HCT116 (cell line): ENCODE measurements at regions of chr17 and their contacts with region 1.

Region 1: DNA sequence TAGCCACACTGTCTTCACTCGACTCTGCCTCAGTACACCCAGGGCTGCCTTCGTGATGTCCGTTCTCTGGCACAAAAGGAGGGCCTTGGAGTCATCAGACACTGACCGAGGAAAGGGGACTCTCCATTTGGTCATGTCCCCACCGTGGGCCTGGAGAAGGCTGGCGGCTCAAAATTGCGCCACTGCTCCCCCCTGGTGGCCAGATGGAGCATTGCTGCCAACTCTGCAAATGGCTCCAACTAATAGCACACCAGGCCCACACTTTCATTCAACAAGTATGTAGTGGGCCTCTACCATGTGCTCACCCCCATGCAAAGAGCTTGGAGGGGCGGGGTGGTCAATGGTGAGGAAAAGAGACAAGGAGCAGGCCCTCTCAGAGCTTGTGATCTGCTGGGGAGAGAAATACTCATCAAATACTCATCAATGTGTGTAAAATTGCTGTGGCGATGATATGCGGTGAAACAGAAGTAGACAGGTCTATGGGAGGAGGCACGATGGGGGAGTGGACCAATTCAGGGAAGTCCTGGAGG is 5.2 kb upstream of the GRIN2C start:
- DNase-seq: peak; percentile 44
- ATAC-seq: peak; percentile 80
- H3K4me3 ChIP-seq: no peak overlapping the region
- H3K27ac ChIP-seq: peak overlapping the region; percentile 7
- H3K4me1 ChIP-seq: peaks cover 0 to 17% of the 10 kb centered on the region in 2 experiments; a peak in 1 of 4 replicates
- H3K27me3 ChIP-seq: no peaks in the 10 kb centered on the region
- CTCF ChIP-seq: peak; percentile 89 to 100 (median 100)
- POLR2A ChIP-seq: no peak
- RAD21 ChIP-seq: no peak; the same call in 1 of the 2 replicates

Region 2: GRCh38 chr17:74579900-74580299 is 285.0 kb before region 1 on chr17:
- CTCF ChIA-PET with region 1: no interaction called
- POLR2A ChIA-PET with region 1: no interaction called
- RAD21 ChIA-PET with region 1: no interaction called
- intact Hi-C with region 1: no loop called
- DNase-seq: no peak
- ATAC-seq: no peak
- H3K4me3 ChIP-seq: no peak overlapping the region
- H3K27ac ChIP-seq: no peak overlapping the region
- H3K4me1 ChIP-seq: no peaks in the 10 kb centered on the region
- H3K27me3 ChIP-seq: peaks cover 21% of the 10 kb centered on the region; the same call in 1 of the 2 replicates
- CTCF ChIP-seq: no peak
- POLR2A ChIP-seq: no peak
- RAD21 ChIP-seq: no peak

Region 3: DNA sequence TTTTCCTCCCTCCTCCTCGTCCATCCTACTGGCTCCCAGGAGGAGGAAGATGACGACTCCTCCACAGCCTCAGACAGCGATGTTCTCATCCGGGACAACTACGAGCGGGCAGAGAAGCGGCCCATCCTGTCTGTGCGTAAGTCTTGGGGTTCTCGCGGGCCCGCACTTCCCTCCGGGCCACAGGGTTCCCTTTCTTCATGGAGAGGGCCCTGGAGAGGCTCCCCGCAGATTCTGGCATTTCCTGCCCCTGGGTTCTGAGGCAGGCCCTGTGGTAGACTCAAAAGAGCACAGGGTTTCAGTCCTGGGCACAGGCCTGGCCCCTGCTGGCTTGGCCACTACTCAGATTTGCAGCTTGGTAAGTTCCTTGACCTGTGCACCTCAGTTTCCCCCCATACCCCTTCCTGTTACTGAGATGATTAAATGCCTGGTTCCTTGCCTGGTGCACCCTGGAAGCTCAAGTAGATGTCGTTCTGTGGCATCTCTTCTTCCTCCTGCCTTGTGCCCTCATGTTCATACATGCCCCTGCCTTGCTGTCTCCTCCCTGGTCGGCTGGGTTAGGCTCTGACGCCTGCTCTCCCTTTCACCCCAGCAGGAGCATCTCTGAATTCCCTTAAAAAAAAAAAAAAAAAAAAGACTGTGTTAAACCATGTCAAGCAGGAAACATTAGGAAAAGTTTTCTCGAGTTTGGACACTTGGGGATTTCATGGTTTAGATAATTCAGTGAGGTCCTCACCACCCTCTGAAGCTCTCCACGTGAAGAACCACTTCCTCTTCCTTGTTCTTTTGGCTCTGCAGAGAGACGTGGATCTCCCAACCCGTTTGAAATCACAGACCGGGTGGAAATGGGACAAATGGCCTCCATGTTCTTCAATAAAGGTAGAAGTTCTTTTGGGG is 74.5 kb before region 1 on chr17:
- CTCF ChIA-PET with region 1: interaction called, 17 read pairs
- POLR2A ChIA-PET with region 1: no interaction called
- RAD21 ChIA-PET with region 1: no interaction called
- intact Hi-C with region 1: loop called (anchors 1 kb)
- DNase-seq: no peak
- ATAC-seq: no peak
- H3K4me3 ChIP-seq: no peak overlapping the region
- H3K27ac ChIP-seq: no peak overlapping the region
- H3K4me1 ChIP-seq: no peaks in the 10 kb centered on the region; a peak in 1 of 4 replicates
- H3K27me3 ChIP-seq: no peaks in the 10 kb centered on the region
- CTCF ChIP-seq: no peak
- POLR2A ChIP-seq: no peak
- RAD21 ChIP-seq: no peak

Region 4: DNA sequence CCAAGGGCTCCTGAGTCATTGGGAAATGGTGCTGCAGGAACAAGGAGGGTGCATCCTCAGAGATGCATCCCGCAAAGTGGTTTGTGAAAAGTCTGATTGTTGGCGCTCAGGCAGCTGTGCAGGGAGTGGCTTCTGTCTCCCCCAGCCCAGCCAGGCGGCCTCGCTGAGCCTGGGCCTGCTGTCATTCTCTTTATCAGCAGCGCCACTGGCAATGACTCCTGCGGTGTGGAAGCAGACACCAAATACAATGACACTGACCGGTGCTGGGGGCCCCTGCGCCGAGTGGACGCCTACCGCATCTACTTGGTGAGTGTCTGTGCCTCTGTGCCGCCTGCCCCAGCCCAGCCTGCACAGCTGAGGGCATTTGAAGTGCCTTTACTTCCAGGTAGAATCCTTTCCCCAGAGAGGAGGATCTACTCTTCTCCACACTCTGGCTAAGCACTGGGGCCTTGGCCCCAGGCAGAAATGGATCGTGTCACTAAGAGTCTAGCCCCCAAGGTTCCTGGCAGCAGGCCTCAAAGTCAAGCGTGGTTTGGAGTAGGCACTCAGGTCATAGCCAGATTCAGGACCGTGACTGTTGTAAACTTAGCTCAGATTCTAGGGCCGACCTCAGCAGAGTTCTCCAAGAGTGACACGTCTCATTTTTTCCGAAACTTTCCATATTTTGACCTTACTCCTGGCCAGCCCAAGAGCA is 69.5 kb before region 1 on chr17:
- CTCF ChIA-PET with region 1: interaction called, 17 read pairs
- POLR2A ChIA-PET with region 1: no interaction called
- RAD21 ChIA-PET with region 1: no interaction called
- intact Hi-C with region 1: loop called (anchors 1 kb)
- DNase-seq: no peak
- ATAC-seq: no peak
- H3K4me3 ChIP-seq: no peak overlapping the region
- H3K27ac ChIP-seq: no peak overlapping the region
- H3K4me1 ChIP-seq: peaks cover 0 to 3% of the 10 kb centered on the region in 2 experiments; a peak in 2 of 4 replicates
- H3K27me3 ChIP-seq: no peaks in the 10 kb centered on the region
- CTCF ChIP-seq: no peak
- POLR2A ChIP-seq: no peak
- RAD21 ChIP-seq: no peak

Region 5: DNA sequence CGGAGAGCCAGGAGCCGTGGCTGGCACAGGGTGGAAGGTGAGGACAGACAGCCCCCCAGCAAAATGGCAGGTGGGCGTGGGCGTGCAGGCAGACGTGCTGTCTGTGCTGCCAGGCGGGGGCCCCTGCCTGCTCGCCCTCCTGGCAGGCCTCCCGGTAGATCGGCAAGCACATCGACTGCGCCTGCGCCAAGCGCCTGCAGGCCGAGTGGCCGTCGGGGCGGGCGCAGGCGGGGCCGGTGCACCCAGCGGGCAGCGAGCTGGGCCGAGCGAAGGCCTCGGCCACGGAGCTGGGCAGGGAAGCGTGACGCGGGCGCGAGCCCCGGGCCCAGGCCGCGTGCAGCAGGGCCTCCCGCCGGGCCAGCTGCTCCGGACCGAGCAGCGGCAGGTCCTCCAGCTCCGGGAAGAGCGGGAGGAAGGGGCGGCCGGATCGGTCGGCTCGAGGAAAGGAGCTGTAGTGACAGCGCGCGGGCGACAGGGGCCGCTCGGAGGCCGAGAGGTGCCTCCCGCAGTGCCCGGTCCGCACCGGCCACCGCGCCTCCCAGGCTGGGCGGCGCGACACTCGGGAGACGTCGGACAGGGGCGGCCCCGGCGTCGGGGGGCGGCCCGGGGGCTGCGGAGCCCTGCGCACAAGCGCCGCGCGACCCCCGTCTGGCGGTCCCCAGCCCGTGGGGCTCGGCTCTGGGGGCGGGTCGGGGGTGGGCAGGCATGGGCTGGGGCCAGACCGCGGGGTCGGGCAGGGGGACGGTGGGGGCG is 22.2 kb before region 1 on chr17:
- CTCF ChIA-PET with region 1: interaction called, 33 read pairs
- POLR2A ChIA-PET with region 1: interaction called, 3 read pairs
- RAD21 ChIA-PET with region 1: interaction called in 1 of 2 experiments, 5 read pairs
- intact Hi-C with region 1: no loop called
- DNase-seq: peak; percentile 56
- ATAC-seq: peak; percentile 90
- H3K4me3 ChIP-seq: peak overlapping the region; percentile 40 to 59
- H3K27ac ChIP-seq: peak overlapping the region; percentile 80; the same call in 1 of the 2 replicates
- H3K4me1 ChIP-seq: peaks cover 7 to 25% of the 10 kb centered on the region in 2 experiments
- H3K27me3 ChIP-seq: no peaks in the 10 kb centered on the region
- CTCF ChIP-seq: peak in 2 of 3 experiments; percentile 58 to 65; a peak in 5 of 6 replicates
- POLR2A ChIP-seq: peak; percentile 36
- RAD21 ChIP-seq: no peak; the same call in none of the 2 replicates